ENCODE measurements at regions of chr5 and their contacts with region 1.

Region 1: GRCh38 chr5:57887851-57888621 is 405.4 kb upstream of the ACTBL2 start:
- DNase-seq: peak; percentile 69
- ATAC-seq: peak; percentile 83
- H3K4me3 ChIP-seq: no peak overlapping the region
- H3K27ac ChIP-seq: no peak overlapping the region
- H3K4me1 ChIP-seq: peaks cover 7% of the 10 kb centered on the region
- H3K27me3 ChIP-seq: no peaks in the 10 kb centered on the region
- CTCF ChIP-seq: peak; percentile 63
- POLR2A ChIP-seq: no peak
- RAD21 ChIP-seq: peak; percentile 80

Region 2: GRCh38 chr5:57650360-57651069 is 237.5 kb before region 1 on chr5:
- CTCF ChIA-PET with region 1: no interaction called
- POLR2A ChIA-PET with region 1: no interaction called
- dilution Hi-C with region 1: no loop called
- in situ Hi-C with region 1: no loop called
- intact Hi-C with region 1: loop called (anchors 5 kb)
- DNase-seq: peak; percentile 53
- ATAC-seq: peak; percentile 86
- H3K4me3 ChIP-seq: no peak overlapping the region
- H3K27ac ChIP-seq: no peak overlapping the region
- H3K4me1 ChIP-seq: no peaks in the 10 kb centered on the region
- H3K27me3 ChIP-seq: no peaks in the 10 kb centered on the region
- CTCF ChIP-seq: peak; percentile 55
- POLR2A ChIP-seq: no peak
- RAD21 ChIP-seq: peak; percentile 66

Region 3: GRCh38 chr5:58188262-58188651 is 300.2 kb after region 1 on chr5:
- CTCF ChIA-PET with region 1: interaction called, 3 read pairs
- POLR2A ChIA-PET with region 1: no interaction called
- dilution Hi-C with region 1: no loop called
- in situ Hi-C with region 1: no loop called
- intact Hi-C with region 1: loop called (anchors 5 kb)
- DNase-seq: peak; percentile 70
- ATAC-seq: peak; percentile 83
- H3K4me3 ChIP-seq: no peak overlapping the region
- H3K27ac ChIP-seq: no peak overlapping the region
- H3K4me1 ChIP-seq: peaks cover 3% of the 10 kb centered on the region
- H3K27me3 ChIP-seq: no peaks in the 10 kb centered on the region
- CTCF ChIP-seq: no peak
- POLR2A ChIP-seq: no peak
- RAD21 ChIP-seq: no peak

Region 4: DNA sequence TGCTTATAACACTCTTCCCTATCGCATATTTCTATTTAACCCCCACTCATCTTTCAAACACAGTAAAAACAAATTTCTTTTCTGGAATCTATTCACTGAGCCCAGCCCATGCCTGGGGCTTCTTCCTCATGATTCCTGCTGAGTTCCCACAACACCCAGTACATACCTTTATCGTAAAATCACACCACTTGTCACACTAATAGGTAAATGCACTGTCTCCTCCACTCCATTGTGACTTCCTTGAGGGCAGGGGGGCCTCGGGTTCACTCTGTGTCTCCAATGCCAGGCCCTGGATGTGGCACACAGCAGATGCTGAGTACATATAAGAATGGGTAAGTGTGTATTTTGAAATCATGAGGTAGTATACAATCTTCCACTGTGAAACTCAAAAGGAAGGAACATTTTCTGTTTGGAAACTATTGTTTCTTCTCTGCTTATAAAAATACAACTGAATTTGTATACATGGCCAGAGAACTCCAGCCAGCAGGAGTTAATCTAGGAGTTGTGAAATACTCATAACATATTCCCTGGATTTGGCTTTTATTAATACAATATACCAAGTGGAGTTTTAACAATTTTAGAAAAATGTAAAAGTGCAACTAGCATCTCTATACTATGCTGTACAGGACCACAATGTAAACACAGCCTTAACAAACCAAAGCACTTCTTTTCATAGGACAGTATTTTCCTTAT is 564.7 kb after region 1 on chr5:
- CTCF ChIA-PET with region 1: interaction called, 4 read pairs
- POLR2A ChIA-PET with region 1: interaction called, 5 read pairs
- dilution Hi-C with region 1: no loop called
- in situ Hi-C with region 1: loop called (anchors 5 kb)
- intact Hi-C with region 1: no loop called
- DNase-seq: peak; percentile 42
- ATAC-seq: peak; percentile 21
- H3K4me3 ChIP-seq: no peak overlapping the region
- H3K27ac ChIP-seq: peak overlapping the region; percentile 53; the same call in 1 of the 2 replicates
- H3K4me1 ChIP-seq: peaks cover 2% of the 10 kb centered on the region; the same call in 1 of the 2 replicates
- H3K27me3 ChIP-seq: no peaks in the 10 kb centered on the region
- CTCF ChIP-seq: no peak
- POLR2A ChIP-seq: peak; percentile 54
- RAD21 ChIP-seq: no peak

Measured in IMR-90 (cell line).